Activated CD4-positive, alpha-beta T cell treated with anti-CD3 and anti-CD28 coated beads for 36 hours (primary cell): ENCODE measurements at regions of chr17 and their contacts with region 1.

Region 1: DNA sequence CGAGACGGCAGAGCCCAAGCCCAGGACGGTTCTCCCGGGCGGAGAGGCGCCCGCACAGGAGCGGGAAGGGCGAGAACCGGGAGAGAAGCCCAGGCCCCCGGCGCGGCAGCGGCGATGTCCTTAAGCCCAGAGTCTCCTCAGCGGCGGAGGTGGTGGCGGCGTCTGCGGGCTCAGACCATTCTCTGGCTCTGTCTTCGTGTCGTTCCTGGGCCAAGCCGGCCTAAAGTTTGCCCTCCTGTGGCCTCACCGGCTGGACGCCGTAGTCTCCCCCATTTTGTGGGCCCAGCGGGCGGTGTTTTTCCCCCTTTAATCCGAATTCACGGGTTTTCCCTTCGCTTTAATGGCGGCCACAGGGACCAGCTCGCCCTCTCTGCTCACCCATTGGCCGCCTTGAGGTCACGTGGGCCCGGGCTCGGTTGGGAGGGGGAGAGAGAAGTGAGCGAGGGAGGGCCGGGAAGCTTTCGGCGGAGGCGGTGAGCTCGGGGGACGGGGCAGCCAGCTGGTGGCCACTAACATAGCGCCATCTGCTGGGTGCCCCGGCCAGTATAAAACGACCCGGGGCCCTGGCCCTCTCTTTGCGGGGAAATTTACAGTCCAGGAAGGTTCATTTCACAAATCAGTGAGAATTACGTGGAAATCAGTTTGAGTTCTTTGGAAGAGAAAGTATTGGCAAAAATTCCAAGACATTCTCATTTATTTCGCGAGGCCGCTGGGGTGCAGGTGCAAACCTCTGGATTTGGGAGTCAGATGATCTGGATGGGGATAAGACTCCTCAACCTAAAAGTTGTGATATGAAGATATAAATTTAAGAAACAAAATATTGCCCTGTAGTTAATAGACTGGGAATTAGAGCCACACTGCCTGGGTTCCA is 755 bp upstream of the MED13 start:
- DNase-seq: peak; percentile 99
- ATAC-seq: peak; percentile 94
- H3K4me3 Mint-ChIP-seq: peak overlapping the region; percentile 98
- H3K27ac Mint-ChIP-seq: peak overlapping the region; percentile 98
- H3K4me1 Mint-ChIP-seq: peaks cover 28% of the 10 kb centered on the region
- H3K27me3 Mint-ChIP-seq: no peaks in the 10 kb centered on the region

Region 2: DNA sequence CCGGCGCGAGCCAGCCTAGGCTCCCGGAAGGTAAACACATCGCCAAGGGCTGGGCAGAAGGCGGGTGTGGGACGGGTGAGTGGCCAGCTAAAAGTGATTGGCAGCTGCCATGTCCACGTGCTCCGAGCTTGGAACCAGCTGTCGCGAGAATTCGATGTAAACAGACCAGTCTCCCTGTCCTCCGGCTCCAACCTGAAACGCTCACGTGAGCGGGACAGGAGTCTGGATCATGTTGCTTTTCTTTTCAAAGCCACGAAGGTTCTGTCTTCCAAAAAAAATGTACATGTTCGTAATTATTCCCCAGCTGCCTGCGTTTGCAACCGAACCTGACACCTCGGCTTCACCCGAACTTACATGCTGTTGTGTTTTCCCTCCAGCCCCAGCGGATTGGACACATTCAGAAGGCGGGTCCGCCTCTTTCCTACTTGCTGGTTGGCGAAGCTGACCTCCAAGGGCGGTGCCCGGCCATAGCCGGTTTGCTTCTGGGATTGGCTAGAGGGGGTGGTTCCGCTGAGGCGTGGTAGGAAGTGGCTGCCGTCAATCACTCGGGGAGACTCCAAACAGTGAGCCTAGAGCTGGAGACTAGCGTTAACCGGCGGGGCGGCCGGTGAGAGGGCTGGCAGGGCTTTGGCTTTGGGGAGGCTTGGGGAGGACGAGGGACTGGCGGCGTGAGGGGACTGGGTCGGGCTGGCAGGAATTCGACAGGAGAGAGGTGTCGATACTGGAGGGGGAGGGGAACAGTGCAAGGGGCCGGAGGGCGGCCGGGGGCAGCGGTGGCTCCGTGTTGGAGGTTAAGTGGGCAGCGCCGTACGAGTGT is 1388.3 kb before region 1 on chr17 and contains the start of gene BCAS3:
- CTCF ChIA-PET with region 1: no interaction called
- POLR2A ChIA-PET with region 1: no interaction called
- intact Hi-C with region 1: loop called in 1 of 2 experiments (anchors 2 kb)
- DNase-seq: peak; percentile 98
- ATAC-seq: peak; percentile 97
- H3K4me3 Mint-ChIP-seq: peak within 1 kb of the TSS; percentile 95
- H3K27ac Mint-ChIP-seq: peak within 1 kb of the TSS; percentile 84
- H3K4me1 Mint-ChIP-seq: peaks cover 16% of the 10 kb centered on the region
- H3K27me3 Mint-ChIP-seq: no peaks in the 10 kb centered on the region
- total RNA-seq, gene BCAS3: 7.2 to 7.5 TPM

Region 3: GRCh38 chr17:61862975-61863800 is 202.6 kb before region 1 on chr17 and contains the start of gene BRIP1:
- CTCF ChIA-PET with region 1: interaction called, 5 read pairs
- POLR2A ChIA-PET with region 1: interaction called, 6 read pairs
- intact Hi-C with region 1: loop called (anchors 1 to 2 kb)
- DNase-seq: peak; percentile 95
- ATAC-seq: peak; percentile 97
- H3K4me3 Mint-ChIP-seq: peak within 1 kb of the TSS; percentile 96
- H3K27ac Mint-ChIP-seq: peak within 1 kb of the TSS; percentile 91
- H3K4me1 Mint-ChIP-seq: peaks cover 26% of the 10 kb centered on the region
- H3K27me3 Mint-ChIP-seq: no peaks in the 10 kb centered on the region
- total RNA-seq, gene BRIP1: 15.4 to 16.2 TPM

Region 4: GRCh38 chr17:61970019-61970418 is 95.8 kb before region 1 on chr17:
- CTCF ChIA-PET with region 1: no interaction called
- POLR2A ChIA-PET with region 1: no interaction called
- intact Hi-C with region 1: loop called in 1 of 2 experiments (anchors 10 kb)
- DNase-seq: no peak
- ATAC-seq: no peak
- H3K4me3 Mint-ChIP-seq: no peak overlapping the region
- H3K27ac Mint-ChIP-seq: no peak overlapping the region
- H3K4me1 Mint-ChIP-seq: peaks cover 8% of the 10 kb centered on the region
- H3K27me3 Mint-ChIP-seq: no peaks in the 10 kb centered on the region

Region 5: GRCh38 chr17:62093188-62094155 is 27.6 kb after region 1 on chr17:
- CTCF ChIA-PET with region 1: interaction called, 3 read pairs
- POLR2A ChIA-PET with region 1: interaction called, 5 read pairs
- intact Hi-C with region 1: loop called in 1 of 2 experiments (anchors 1 kb)
- DNase-seq: peak; percentile 39
- ATAC-seq: peak; percentile 100
- H3K4me3 Mint-ChIP-seq: no peak overlapping the region
- H3K27ac Mint-ChIP-seq: no peak overlapping the region
- H3K4me1 Mint-ChIP-seq: peaks cover 13% of the 10 kb centered on the region
- H3K27me3 Mint-ChIP-seq: no peaks in the 10 kb centered on the region

Region 6: GRCh38 chr17:62968445-62968923 is 902.7 kb after region 1 on chr17:
- CTCF ChIA-PET with region 1: no interaction called
- POLR2A ChIA-PET with region 1: no interaction called
- intact Hi-C with region 1: loop called in 1 of 2 experiments (anchors 10 kb)
- DNase-seq: peak; percentile 62
- ATAC-seq: peak; percentile 67
- H3K4me3 Mint-ChIP-seq: no peak overlapping the region
- H3K27ac Mint-ChIP-seq: no peak overlapping the region
- H3K4me1 Mint-ChIP-seq: peaks cover 26% of the 10 kb centered on the region
- H3K27me3 Mint-ChIP-seq: peaks cover 16% of the 10 kb centered on the region